Activated CD8-positive, alpha-beta T cell treated with anti-CD3 and anti-CD28 coated beads for 36 hours (primary cell): ENCODE measurements at regions of chr1 and their contacts with region 1.

Region 1: DNA sequence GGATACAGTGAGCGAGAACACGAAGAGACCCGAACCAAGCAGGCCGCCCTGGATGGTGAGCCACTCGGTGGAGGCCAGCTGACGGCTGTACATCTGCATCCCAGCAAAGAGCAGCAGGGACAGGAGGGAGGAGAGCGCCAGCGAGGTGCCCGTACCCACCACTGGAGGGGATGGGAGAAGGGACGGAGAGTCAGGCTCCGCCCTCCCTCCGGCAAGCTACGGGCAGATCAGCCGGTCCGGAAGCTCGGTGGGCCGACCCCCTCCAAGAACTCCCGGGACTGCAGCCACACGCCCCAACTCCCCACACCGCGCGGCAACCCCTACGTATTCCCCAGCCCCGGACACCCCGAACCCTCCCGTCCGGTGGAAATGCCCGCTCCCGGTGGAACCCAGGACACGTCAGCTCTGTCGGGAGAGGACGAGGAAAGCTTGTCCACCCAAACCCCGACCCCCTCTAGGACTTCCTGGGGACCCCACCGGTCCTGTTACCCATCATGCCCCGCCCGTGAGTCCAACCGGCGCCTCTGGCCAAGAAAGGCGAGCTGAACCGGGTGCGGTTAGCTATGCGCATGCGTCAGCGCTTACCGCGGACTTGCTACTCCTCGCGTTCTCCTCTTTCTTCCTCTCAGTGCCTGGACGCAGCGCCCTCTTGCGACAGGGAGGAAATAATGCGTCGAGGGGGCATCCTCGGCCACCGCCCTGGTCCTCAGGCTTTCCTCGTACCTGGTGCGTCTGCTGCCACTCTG is at the start of gene KRTCAP2:
- DNase-seq: peak; percentile 97
- ATAC-seq: peak; percentile 83
- H3K4me3 Mint-ChIP-seq: peak within 1 kb of the TSS; percentile 96
- H3K27ac Mint-ChIP-seq: peak within 1 kb of the TSS; percentile 98
- H3K4me1 Mint-ChIP-seq: peaks cover 45% of the 10 kb centered on the region
- H3K27me3 Mint-ChIP-seq: no peaks in the 10 kb centered on the region
- CTCF ChIP-seq: peak; percentile 91
- total RNA-seq, gene KRTCAP2: 124 to 125 TPM

Region 2: GRCh38 chr1:155070721-155071569 is 102.0 kb before region 1 on chr1:
- CTCF ChIA-PET with region 1: interaction called, 14 read pairs
- POLR2A ChIA-PET with region 1: interaction called, 5 read pairs
- intact Hi-C with region 1: no loop called
- DNase-seq: peak; percentile 90
- ATAC-seq: peak; percentile 94
- H3K4me3 Mint-ChIP-seq: peak overlapping the region; percentile 56
- H3K27ac Mint-ChIP-seq: no peak overlapping the region
- H3K4me1 Mint-ChIP-seq: peaks cover 21% of the 10 kb centered on the region
- H3K27me3 Mint-ChIP-seq: no peaks in the 10 kb centered on the region
- CTCF ChIP-seq: peak; percentile 64

Region 3: GRCh38 chr1:155127105-155127964 is 45.6 kb before region 1 on chr1 and contains the start of gene EFNA1:
- CTCF ChIA-PET with region 1: interaction called, 69 read pairs
- POLR2A ChIA-PET with region 1: interaction called, 3 read pairs
- intact Hi-C with region 1: no loop called
- DNase-seq: peak; percentile 43
- ATAC-seq: peak; percentile 59
- H3K4me3 Mint-ChIP-seq: peak within 1 kb of the TSS; percentile 73
- H3K27ac Mint-ChIP-seq: peak within 1 kb of the TSS; percentile 34
- H3K4me1 Mint-ChIP-seq: peaks cover 34% of the 10 kb centered on the region
- H3K27me3 Mint-ChIP-seq: peaks cover 21% of the 10 kb centered on the region
- CTCF ChIP-seq: no peak
- total RNA-seq, gene EFNA1: 0.59 to 0.60 TPM

Region 4: GRCh38 chr1:155185351-155186066 is 12.6 kb after region 1 on chr1:
- CTCF ChIA-PET with region 1: interaction called, 10 read pairs
- POLR2A ChIA-PET with region 1: interaction called, 7 read pairs
- intact Hi-C with region 1: no loop called
- DNase-seq: no peak
- ATAC-seq: no peak
- H3K4me3 Mint-ChIP-seq: no peak overlapping the region
- H3K27ac Mint-ChIP-seq: peak overlapping the region; percentile 61
- H3K4me1 Mint-ChIP-seq: no peaks in the 10 kb centered on the region
- H3K27me3 Mint-ChIP-seq: no peaks in the 10 kb centered on the region
- CTCF ChIP-seq: no peak

Region 5: DNA sequence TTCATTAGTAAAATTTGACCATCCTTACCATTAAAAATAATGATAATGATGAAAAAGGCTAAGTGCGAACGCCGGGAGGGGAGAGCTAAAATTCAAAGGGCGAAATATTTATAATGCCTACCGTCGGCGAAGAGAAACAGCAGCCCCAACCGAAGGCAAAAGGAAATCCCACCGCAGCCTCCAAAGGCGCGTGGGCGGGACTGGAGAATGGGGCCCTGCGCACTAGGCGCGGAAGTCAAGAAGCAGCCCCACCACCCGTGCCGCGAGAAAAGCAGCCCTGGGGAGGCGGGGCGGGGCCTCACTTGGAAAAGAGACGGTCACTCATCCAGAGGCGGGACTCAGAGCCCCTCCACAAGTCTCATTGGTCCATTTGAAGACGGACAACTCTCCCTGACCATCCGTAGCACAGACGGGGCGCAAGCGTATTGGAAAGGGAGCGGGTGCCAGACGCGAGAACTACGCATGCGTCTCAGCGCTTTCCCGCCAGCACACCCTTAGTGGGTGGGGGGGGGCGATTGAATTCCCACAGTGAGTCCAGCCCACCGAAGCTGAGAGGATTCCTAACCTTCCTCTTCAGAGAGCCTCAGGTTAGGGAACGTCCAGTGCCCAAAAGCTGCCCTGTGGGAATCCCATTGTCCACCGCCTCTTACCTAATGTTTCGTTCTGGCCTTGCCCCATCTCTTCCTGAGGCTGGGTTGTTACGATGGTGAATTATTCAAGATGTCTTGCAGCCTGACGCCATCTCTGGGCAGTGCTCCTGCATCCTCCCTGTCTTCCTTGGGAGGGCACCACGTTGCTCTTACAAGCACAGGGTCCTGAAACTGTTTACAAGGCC is 54.6 kb after region 1 on chr1:
- CTCF ChIA-PET with region 1: interaction called, 26 read pairs
- POLR2A ChIA-PET with region 1: interaction called, 8 read pairs
- intact Hi-C with region 1: loop called (anchors 5 kb)
- DNase-seq: peak; percentile 100
- ATAC-seq: peak; percentile 98
- H3K4me3 Mint-ChIP-seq: peak overlapping the region; percentile 91
- H3K27ac Mint-ChIP-seq: peak overlapping the region; percentile 99
- H3K4me1 Mint-ChIP-seq: peaks cover 37% of the 10 kb centered on the region
- H3K27me3 Mint-ChIP-seq: no peaks in the 10 kb centered on the region
- CTCF ChIP-seq: no peak